ENCODE measurements at regions of chr3 and their contacts with region 1.

Region 1: GRCh38 chr3:189148081-189148507 is 23.7 kb upstream of the TPRG1 start:
- DNase-seq: peak; percentile 73
- H3K4me3 Mint-ChIP-seq: no peak overlapping the region
- H3K27ac Mint-ChIP-seq: no peak overlapping the region
- H3K4me1 Mint-ChIP-seq: peaks cover 6% of the 10 kb centered on the region
- H3K27me3 Mint-ChIP-seq: no peaks in the 10 kb centered on the region
- CTCF ChIP-seq: peak; percentile 59

Region 2: DNA sequence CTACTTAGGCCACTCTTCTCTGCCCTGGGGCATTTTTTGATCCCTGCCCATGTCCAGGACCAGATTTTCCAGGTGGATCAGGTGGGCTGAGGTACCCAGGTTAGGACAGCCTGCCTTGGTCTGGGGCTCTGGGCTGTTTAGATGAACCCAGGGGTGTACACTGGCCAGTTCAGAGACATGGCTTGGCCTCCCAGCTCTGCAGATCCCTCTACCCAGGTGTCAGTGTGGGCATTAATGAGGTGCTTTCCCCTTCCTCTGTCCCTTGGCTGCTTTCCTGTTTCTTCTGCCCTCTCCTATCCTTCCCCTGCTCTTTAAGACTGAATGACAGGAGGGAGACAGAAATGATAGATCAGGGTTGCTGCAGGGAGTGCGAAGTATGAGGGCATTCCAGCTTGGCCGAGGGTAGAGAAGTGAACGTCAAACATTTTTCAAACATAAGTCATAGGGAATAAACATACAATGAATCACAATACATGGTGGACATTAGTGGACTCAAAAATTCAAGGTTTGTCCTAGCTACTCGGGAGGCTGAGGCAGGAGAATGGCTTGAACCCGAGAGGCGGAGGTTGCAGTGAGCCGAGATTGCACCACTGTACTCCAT is 1920.3 kb before region 1 on chr3:
- CTCF ChIA-PET with region 1: no interaction called
- POLR2A ChIA-PET with region 1: no interaction called
- intact Hi-C with region 1: loop called (anchors 10 kb)
- DNase-seq: peak; percentile 45
- H3K4me3 Mint-ChIP-seq: no peak overlapping the region
- H3K27ac Mint-ChIP-seq: no peak overlapping the region
- H3K4me1 Mint-ChIP-seq: peaks cover 27% of the 10 kb centered on the region
- H3K27me3 Mint-ChIP-seq: no peaks in the 10 kb centered on the region
- CTCF ChIP-seq: no peak

Region 3: GRCh38 chr3:188734429-188734861 is 413.6 kb before region 1 on chr3:
- CTCF ChIA-PET with region 1: no interaction called
- POLR2A ChIA-PET with region 1: no interaction called
- intact Hi-C with region 1: no loop called
- DNase-seq: peak; percentile 45
- H3K4me3 Mint-ChIP-seq: no peak overlapping the region
- H3K27ac Mint-ChIP-seq: no peak overlapping the region
- H3K4me1 Mint-ChIP-seq: peaks cover 11% of the 10 kb centered on the region
- H3K27me3 Mint-ChIP-seq: no peaks in the 10 kb centered on the region
- CTCF ChIP-seq: no peak

Region 4: GRCh38 chr3:188760408-188760807 is 387.7 kb before region 1 on chr3:
- CTCF ChIA-PET with region 1: no interaction called
- POLR2A ChIA-PET with region 1: no interaction called
- intact Hi-C with region 1: no loop called
- DNase-seq: peak; percentile 47
- H3K4me3 Mint-ChIP-seq: no peak overlapping the region
- H3K27ac Mint-ChIP-seq: no peak overlapping the region
- H3K4me1 Mint-ChIP-seq: peaks cover 4% of the 10 kb centered on the region
- H3K27me3 Mint-ChIP-seq: no peaks in the 10 kb centered on the region
- CTCF ChIP-seq: no peak

Region 5: DNA sequence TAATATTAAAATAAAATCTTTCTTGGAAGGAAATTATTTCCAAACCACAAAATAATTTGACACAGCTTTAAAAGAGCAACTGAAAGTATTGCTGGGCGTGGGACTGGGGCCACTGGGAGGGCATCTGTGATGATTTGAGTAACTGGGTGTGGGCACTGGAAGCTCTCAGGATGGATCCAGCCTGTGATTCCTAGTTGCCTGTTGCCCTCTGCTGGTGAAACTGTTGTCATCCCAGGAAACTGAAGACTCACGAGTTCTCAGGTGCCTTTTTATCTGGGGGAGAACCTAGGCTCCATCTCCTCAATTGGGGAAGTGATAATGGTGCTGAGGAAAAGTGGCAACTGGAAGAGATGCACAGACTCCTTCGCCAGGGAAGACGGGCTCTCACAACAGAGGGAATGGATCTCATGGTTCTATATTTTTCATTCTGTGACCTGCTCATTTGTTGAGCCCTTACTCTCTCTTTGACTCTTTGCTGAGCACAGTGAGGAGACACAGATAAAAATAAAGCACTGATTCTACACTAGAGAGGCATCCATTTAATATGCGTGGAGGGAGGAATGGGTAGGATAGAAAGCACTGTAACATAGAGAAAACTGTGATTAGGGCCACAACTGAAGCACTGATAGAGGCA is 85.2 kb after region 1 on chr3:
- CTCF ChIA-PET with region 1: interaction called, 14 read pairs
- POLR2A ChIA-PET with region 1: no interaction called
- intact Hi-C with region 1: loop called (anchors 1 kb)
- DNase-seq: peak; percentile 78
- H3K4me3 Mint-ChIP-seq: no peak overlapping the region
- H3K27ac Mint-ChIP-seq: no peak overlapping the region
- H3K4me1 Mint-ChIP-seq: no peaks in the 10 kb centered on the region
- H3K27me3 Mint-ChIP-seq: no peaks in the 10 kb centered on the region
- CTCF ChIP-seq: peak; percentile 67

Region 6: GRCh38 chr3:189698811-189699210 is 550.7 kb after region 1 on chr3:
- CTCF ChIA-PET with region 1: no interaction called
- POLR2A ChIA-PET with region 1: no interaction called
- intact Hi-C with region 1: no loop called
- DNase-seq: no peak
- H3K4me3 Mint-ChIP-seq: no peak overlapping the region
- H3K27ac Mint-ChIP-seq: no peak overlapping the region
- H3K4me1 Mint-ChIP-seq: no peaks in the 10 kb centered on the region
- H3K27me3 Mint-ChIP-seq: no peaks in the 10 kb centered on the region
- CTCF ChIP-seq: no peak

Measured in MCF 10A (cell line).